Activated CD4-positive, alpha-beta T cell treated with anti-CD3 and anti-CD28 coated beads for 36 hours (primary cell): ENCODE measurements at regions of chrX and their contacts with region 1.

Region 1: DNA sequence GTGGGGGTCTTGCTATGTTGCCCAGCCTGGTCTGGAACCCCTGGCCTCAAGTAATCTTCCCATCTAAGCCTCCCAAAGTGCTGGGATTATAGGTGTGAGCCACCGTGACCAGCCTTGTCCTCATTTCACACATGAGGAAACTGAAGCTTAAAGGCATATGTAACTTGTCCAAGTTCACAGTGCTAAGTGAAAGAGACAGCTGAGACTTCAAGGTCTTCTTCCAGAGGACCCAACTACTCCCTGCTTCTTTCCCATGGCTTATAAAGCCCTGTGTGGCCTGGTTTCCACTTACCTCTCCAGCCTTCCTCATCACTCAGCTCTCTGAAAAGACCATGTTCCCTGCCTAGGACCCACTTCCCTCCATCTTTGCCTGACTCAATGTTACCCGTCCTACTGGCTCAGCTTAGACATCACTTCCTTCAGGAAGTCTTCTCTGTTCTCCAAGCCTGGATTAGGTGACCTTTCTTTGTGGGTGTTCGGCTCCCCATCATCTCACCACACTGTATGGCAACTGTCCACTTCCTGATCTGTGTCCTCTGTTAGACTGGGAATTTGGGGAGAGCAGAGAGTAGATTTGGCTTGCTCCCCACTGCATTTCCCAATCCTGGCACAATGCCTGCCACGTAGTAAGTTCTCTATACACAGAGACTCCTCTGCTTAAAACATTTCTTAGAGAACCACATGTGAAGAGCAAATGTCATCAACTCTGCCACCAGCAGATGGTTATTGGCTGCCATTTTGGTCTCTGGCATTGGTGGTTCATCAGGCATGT is 30.4 kb upstream of the LAMP2 start:
- DNase-seq: no peak
- ATAC-seq: no peak
- H3K4me3 Mint-ChIP-seq: no peak overlapping the region
- H3K27ac Mint-ChIP-seq: no peak overlapping the region
- H3K4me1 Mint-ChIP-seq: peaks cover 3% of the 10 kb centered on the region
- H3K27me3 Mint-ChIP-seq: no peaks in the 10 kb centered on the region

Region 2: DNA sequence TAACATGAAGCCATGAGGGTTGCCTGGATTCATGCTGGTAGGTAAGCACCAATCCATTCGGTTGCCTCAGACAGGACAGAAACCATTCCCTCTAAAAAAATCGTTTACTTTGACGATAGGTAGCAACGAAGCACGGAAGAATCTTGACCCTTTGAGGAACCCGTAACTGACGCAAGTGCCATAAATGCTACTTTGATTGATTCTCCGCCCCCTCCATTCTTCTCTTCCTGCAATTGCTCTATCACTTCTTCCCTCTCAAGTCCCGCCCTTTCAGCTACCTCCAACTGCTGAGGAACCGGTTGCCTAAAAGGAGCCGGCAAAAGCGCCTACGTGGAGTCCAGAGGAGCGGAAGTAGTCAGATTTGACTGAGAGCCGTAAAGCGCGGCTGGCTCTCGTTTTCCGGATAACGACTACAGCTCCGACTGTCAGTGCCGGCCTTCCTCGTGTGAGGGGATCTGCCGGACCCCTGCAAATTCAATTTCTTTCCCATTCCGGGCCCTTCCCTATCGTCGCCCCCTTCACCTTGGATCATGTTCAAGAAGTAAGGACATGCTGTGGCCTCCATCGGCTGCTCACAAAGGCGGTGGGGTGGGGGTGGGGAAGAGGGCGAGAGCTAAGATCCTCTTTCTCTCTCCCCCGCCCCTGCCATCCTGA is 104.3 kb after region 1 on chrX and contains the start of gene MCTS1:
- CTCF ChIA-PET with region 1: no interaction called
- POLR2A ChIA-PET with region 1: no interaction called
- intact Hi-C with region 1: loop called (anchors 1 kb)
- DNase-seq: peak; percentile 87
- ATAC-seq: peak; percentile 98
- H3K4me3 Mint-ChIP-seq: peak within 1 kb of the TSS; percentile 96
- H3K27ac Mint-ChIP-seq: peak within 1 kb of the TSS; percentile 97
- H3K4me1 Mint-ChIP-seq: peaks cover 5% of the 10 kb centered on the region
- H3K27me3 Mint-ChIP-seq: no peaks in the 10 kb centered on the region
- total RNA-seq, gene MCTS1: 47.8 to 73.3 TPM

Region 3: DNA sequence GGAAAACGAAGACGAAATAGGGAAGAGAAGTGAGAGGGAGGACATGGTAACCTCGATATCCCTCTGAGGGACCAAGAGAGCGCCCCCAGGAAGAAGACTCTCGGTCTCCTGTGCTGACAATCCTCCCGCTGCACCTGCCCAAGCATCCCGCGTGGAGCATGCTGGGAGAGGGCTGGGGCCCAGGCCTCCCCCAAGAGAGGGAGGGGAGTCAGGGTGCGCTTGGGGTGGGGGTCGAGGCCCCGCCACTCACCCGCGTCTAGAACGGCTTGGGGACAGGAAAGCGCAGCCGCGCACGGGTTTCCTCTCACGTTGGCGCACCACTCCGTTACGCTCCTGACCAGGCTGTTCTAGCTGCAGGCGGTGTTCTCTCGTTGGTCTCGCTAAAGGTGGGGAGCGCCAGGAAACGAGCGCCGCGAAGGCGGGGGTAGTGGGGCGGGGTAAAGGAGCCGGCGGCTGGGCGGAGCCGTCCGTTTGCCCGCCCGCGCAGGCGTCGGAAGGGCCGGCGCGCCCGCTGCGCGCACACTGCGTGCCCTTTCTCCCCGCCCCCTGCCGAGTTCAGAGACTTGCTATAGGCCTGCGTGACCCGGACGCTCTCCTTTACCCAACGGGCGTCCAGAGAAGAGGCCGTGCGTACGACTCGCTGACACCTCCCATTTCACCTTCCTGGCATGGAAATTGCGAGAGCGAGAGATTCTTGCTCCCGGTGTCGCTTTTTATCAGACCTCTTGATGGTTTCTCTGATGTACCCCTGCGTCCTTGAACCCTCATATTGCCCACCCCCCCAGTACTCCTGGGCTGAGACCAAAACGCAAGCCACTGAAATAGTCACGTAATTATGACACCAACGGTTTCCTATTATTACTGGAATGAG is 130.4 kb after region 1 on chrX and contains the start of gene C1GALT1C1:
- CTCF ChIA-PET with region 1: no interaction called
- POLR2A ChIA-PET with region 1: interaction called, 6 read pairs
- intact Hi-C with region 1: loop called in 1 of 2 experiments (anchors 1 kb)
- DNase-seq: peak; percentile 95
- ATAC-seq: peak; percentile 95
- H3K4me3 Mint-ChIP-seq: peak within 1 kb of the TSS; percentile 91
- H3K27ac Mint-ChIP-seq: peak within 1 kb of the TSS; percentile 99
- H3K4me1 Mint-ChIP-seq: peaks cover 20% of the 10 kb centered on the region
- H3K27me3 Mint-ChIP-seq: no peaks in the 10 kb centered on the region
- total RNA-seq, gene C1GALT1C1: 15.1 to 18.2 TPM

Region 4: GRCh38 chrX:120664081-120664480 is 164.6 kb after region 1 on chrX:
- CTCF ChIA-PET with region 1: no interaction called
- POLR2A ChIA-PET with region 1: no interaction called
- intact Hi-C with region 1: loop called (anchors 1 to 10 kb)
- DNase-seq: no peak
- ATAC-seq: no peak
- H3K4me3 Mint-ChIP-seq: no peak overlapping the region
- H3K27ac Mint-ChIP-seq: no peak overlapping the region
- H3K4me1 Mint-ChIP-seq: peaks cover 4% of the 10 kb centered on the region
- H3K27me3 Mint-ChIP-seq: no peaks in the 10 kb centered on the region

Region 5: GRCh38 chrX:120753413-120754251 is 254.1 kb after region 1 on chrX:
- CTCF ChIA-PET with region 1: interaction called, 3 read pairs
- POLR2A ChIA-PET with region 1: no interaction called
- intact Hi-C with region 1: loop called in 1 of 2 experiments (anchors 5 kb)
- DNase-seq: peak; percentile 61
- ATAC-seq: peak; percentile 71
- H3K4me3 Mint-ChIP-seq: peak overlapping the region; percentile 32
- H3K27ac Mint-ChIP-seq: peak overlapping the region; percentile 53
- H3K4me1 Mint-ChIP-seq: peaks cover 46% of the 10 kb centered on the region
- H3K27me3 Mint-ChIP-seq: no peaks in the 10 kb centered on the region

Region 6: DNA sequence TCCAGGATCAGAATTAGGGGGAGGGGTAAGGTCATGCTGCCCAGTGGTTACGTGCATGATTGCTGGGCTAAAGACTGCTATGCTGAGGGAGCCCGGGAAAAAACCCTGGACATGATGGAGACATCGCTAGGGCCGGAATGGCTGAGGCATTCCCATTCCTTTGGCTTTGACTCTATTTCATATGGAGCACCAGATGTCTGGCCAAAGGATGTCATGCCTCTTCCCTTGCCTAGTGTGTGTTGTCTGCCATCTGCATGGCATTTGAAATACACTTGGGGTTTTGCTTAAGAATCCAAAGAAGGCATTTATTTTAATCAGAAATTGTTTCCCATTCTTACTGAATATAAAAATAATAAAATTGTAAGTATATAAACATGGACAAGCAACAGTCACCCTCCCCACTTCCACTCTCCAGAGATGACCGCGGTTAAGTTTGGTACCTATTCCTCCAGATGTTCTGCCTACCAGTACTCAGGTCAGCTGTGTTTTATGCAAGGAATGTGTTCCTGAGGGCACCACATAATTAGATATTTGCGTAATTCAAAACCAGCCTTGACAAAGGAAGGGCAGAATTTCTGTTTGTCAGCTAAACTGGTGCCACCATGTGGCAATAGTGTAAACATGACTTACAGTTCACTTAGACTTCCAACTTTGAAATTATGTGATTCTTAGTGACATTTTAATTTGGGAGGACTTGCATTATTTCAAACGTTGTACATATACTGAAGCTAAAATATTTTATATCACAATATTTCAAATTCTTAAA is 270.3 kb after region 1 on chrX:
- CTCF ChIA-PET with region 1: interaction called, 3 read pairs
- POLR2A ChIA-PET with region 1: no interaction called
- intact Hi-C with region 1: loop called (anchors 1 kb)
- DNase-seq: peak; percentile 13
- ATAC-seq: no peak
- H3K4me3 Mint-ChIP-seq: no peak overlapping the region
- H3K27ac Mint-ChIP-seq: no peak overlapping the region
- H3K4me1 Mint-ChIP-seq: peaks cover 4% of the 10 kb centered on the region
- H3K27me3 Mint-ChIP-seq: no peaks in the 10 kb centered on the region

Region 7: GRCh38 chrX:121579016-121579760 is 1079.7 kb after region 1 on chrX:
- CTCF ChIA-PET with region 1: no interaction called
- POLR2A ChIA-PET with region 1: no interaction called
- intact Hi-C with region 1: loop called in 1 of 2 experiments (anchors 5 kb)
- DNase-seq: peak; percentile 43
- ATAC-seq: peak; percentile 64
- H3K4me3 Mint-ChIP-seq: no peak overlapping the region
- H3K27ac Mint-ChIP-seq: no peak overlapping the region
- H3K4me1 Mint-ChIP-seq: peaks cover 10% of the 10 kb centered on the region
- H3K27me3 Mint-ChIP-seq: no peaks in the 10 kb centered on the region